ENCODE measurements at regions of chr2 and their contacts with region 1.

Region 1: DNA sequence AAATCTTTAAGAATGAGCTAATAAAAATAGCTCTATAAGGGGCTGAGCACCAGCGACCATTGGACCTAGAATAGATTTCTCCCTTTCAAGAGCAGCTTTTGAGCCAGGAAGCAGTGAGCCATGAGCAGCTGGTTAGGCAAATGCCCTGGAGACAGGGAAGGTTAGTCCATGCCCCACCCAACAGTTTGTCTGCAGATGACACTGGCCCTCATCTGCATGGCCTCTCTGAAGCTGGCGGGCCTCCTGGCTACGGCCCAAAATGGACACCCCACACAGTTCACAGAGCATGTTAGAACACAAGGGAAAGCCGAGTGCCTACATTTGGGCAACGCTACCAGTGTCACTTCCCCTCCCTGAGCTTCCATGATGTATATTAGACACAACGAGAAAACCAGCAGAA is 201.1 kb downstream of the MGAT5 start:
- DNase-seq: no peak
- ATAC-seq: no peak

Region 2: GRCh38 chr2:134897932-134898331 is 443.0 kb after region 1 on chr2:
- intact Hi-C with region 1: loop called (anchors 5 kb)
- DNase-seq: no peak
- ATAC-seq: no peak